Head of caudate nucleus (tissue), 42 donors: ENCODE measurements at regions of chr6 and their contacts with region 1.

Region 1: GRCh38 chr6:106444777-106445507 is 84.4 kb downstream of the CRYBG1 start:
- DNase-seq: peak in 11 of 42 donors; percentile 10 to 69 (median 54)

Region 2: DNA sequence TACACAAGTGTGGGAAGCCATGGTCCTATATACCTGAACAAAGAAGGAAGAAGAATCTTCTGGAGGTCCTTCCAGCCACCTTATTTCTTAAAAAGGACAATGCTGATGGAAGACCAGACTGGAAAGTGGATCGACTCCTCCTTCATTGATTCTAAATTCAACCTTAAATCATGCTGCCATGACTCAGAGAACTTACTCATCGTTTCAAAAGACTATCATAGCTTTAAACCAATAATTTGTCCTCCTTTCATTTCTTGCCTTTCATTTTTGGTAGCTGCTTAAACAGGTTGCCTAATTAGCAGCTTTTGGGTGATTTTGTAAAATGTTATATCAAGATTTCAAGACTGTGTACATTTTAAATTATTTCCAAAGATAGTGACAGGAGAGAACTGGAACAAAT is 123.6 kb after region 1 on chr6:
- intact Hi-C with region 1: loop called (anchors 5 kb)
- DNase-seq: no peak

Region 3: GRCh38 chr6:106981926-106982325 is 537.0 kb after region 1 on chr6:
- intact Hi-C with region 1: loop called (anchors 10 kb)
- DNase-seq: no peak